PC-9 (cell line): ENCODE measurements at regions of chr3 and their contacts with region 1.

Region 1: GRCh38 chr3:128383316-128384235 is 83.1 kb downstream of the DNAJB8 start:
- DNase-seq: peak; percentile 83 to 95
- H3K4me3 ChIP-seq: no peak overlapping the region
- H3K27ac ChIP-seq: peak overlapping the region; percentile 62
- H3K4me1 ChIP-seq: peaks cover 31% of the 10 kb centered on the region
- H3K27me3 ChIP-seq: no peaks in the 10 kb centered on the region
- CTCF ChIP-seq: no peak

Region 2: GRCh38 chr3:128524374-128525299 is 141.1 kb after region 1 on chr3:
- CTCF ChIA-PET with region 1: no interaction called
- POLR2A ChIA-PET with region 1: no interaction called
- intact Hi-C with region 1: no loop called
- DNase-seq: no peak
- H3K4me3 ChIP-seq: no peak overlapping the region
- H3K27ac ChIP-seq: no peak overlapping the region
- H3K4me1 ChIP-seq: no peaks in the 10 kb centered on the region
- H3K27me3 ChIP-seq: peaks cover 38% of the 10 kb centered on the region
- CTCF ChIP-seq: no peak

Region 3: GRCh38 chr3:128698211-128699064 is 314.9 kb after region 1 on chr3:
- CTCF ChIA-PET with region 1: no interaction called
- POLR2A ChIA-PET with region 1: interaction called, 11 read pairs
- intact Hi-C with region 1: no loop called
- DNase-seq: peak; percentile 40 to 65
- H3K4me3 ChIP-seq: peak overlapping the region; percentile 60
- H3K27ac ChIP-seq: no peak overlapping the region
- H3K4me1 ChIP-seq: no peaks in the 10 kb centered on the region
- H3K27me3 ChIP-seq: no peaks in the 10 kb centered on the region
- CTCF ChIP-seq: no peak

Region 4: DNA sequence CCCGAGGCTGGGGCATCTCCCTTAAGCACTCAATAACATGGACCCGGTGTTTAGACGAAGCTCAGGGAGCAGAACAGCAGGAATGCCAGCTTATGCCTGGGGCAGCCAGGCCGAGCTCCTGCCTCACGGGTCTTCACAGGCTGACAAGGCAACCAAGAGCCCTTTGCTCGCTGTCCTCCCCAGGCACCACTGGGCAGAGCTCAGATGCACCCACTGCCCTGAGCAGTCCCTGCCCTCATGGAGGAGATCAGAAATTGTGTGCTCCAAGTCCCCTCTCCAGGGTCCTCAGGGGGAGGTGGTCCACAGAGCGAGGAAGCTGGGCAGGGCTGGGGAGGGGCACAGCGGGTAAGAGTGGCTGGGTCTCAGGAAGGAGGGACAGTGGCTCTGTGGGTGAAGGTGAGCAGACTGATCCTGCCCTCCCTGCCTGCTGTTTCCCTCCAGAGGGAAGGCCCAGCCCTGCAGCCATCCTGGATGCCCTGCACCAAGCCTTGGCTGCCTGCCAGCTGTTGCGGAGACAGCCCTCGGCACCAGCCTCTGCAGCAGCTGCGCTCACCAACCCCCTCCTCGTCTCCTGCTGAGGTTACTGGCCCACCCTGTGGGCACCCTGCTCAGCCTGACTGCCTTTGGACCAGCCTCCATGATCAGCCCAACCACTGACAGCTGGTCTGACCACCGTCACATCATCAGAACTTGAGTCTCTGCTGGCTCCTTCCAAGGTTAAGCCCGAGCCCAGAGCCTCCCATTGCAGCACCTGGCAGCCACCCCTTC is 655.9 kb after region 1 on chr3:
- CTCF ChIA-PET with region 1: interaction called, 12 read pairs
- POLR2A ChIA-PET with region 1: no interaction called
- intact Hi-C with region 1: no loop called
- DNase-seq: peak in 1 of 2 experiments; percentile 48
- H3K4me3 ChIP-seq: no peak overlapping the region
- H3K27ac ChIP-seq: no peak overlapping the region
- H3K4me1 ChIP-seq: no peaks in the 10 kb centered on the region
- H3K27me3 ChIP-seq: peaks cover 17% of the 10 kb centered on the region; the same call in 1 of the 2 replicates
- CTCF ChIP-seq: no peak